ENCODE measurements at regions of chr10 and their contacts with region 1.

Region 1: DNA sequence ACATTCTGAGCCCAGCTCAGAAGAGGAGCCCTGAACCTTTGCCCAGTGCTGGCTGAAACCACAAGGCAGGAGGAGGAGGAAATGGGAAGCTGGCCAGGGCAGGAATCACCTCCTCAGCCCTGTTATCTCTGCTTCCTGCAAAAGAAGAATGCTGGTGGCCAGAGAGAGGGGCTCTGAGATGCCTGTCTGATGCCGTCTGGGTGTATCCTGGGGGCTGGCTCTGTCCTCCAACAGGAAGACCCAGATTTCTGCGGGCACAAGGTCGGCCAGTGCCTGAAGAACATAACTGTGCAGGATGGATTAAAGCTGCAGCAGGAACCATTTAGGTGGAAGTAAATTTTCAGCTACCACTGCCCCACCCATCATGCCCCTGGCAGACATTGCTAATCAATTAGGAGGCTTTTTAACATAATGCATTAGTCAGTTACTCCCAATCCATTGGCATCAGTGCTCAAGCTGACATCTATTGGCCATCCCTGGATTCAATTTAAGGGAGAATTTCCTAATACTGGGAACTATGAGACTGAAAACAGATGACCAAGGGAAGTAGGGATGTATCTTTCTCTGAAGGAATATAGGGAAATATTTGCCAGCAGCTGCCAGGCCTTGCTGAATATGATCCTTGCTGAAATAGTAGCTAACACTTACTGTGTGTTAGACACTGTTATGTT is 67.7 kb downstream of the COL13A1 start:
- DNase-seq: no peak
- ATAC-seq: no peak
- H3K4me3 Mint-ChIP-seq: no peak overlapping the region
- H3K27ac Mint-ChIP-seq: no peak overlapping the region
- H3K4me1 Mint-ChIP-seq: peaks cover 93% of the 10 kb centered on the region
- H3K27me3 Mint-ChIP-seq: peaks cover 18% of the 10 kb centered on the region
- CTCF ChIP-seq: no peak

Region 2: GRCh38 chr10:69749178-69750010 is 120.0 kb before region 1 on chr10:
- CTCF ChIA-PET with region 1: no interaction called
- POLR2A ChIA-PET with region 1: no interaction called
- DNase-seq: no peak
- ATAC-seq: no peak
- H3K4me3 Mint-ChIP-seq: no peak overlapping the region
- H3K27ac Mint-ChIP-seq: no peak overlapping the region
- H3K4me1 Mint-ChIP-seq: peaks cover 9% of the 10 kb centered on the region
- H3K27me3 Mint-ChIP-seq: peaks cover 22% of the 10 kb centered on the region
- CTCF ChIP-seq: no peak

Region 3: GRCh38 chr10:69800109-69800508 is 69.3 kb before region 1 on chr10:
- CTCF ChIA-PET with region 1: interaction called, 12 read pairs
- POLR2A ChIA-PET with region 1: no interaction called
- DNase-seq: peak; percentile 72
- ATAC-seq: peak; percentile 58
- H3K4me3 Mint-ChIP-seq: no peak overlapping the region; the same call in 1 of the 2 replicates
- H3K27ac Mint-ChIP-seq: no peak overlapping the region
- H3K4me1 Mint-ChIP-seq: peaks cover 37% of the 10 kb centered on the region
- H3K27me3 Mint-ChIP-seq: peaks cover 74% of the 10 kb centered on the region
- CTCF ChIP-seq: peak; percentile 48; the same call in 1 of the 2 replicates

Region 4: GRCh38 chr10:69826789-69827554 is 42.5 kb before region 1 on chr10:
- CTCF ChIA-PET with region 1: interaction called, 10 read pairs
- POLR2A ChIA-PET with region 1: no interaction called
- DNase-seq: peak; percentile 36
- ATAC-seq: peak; percentile 79
- H3K4me3 Mint-ChIP-seq: no peak overlapping the region
- H3K27ac Mint-ChIP-seq: no peak overlapping the region
- H3K4me1 Mint-ChIP-seq: peaks cover 24% of the 10 kb centered on the region
- H3K27me3 Mint-ChIP-seq: peaks cover 5% of the 10 kb centered on the region; the same call in 1 of the 2 replicates
- CTCF ChIP-seq: no peak

Region 5: DNA sequence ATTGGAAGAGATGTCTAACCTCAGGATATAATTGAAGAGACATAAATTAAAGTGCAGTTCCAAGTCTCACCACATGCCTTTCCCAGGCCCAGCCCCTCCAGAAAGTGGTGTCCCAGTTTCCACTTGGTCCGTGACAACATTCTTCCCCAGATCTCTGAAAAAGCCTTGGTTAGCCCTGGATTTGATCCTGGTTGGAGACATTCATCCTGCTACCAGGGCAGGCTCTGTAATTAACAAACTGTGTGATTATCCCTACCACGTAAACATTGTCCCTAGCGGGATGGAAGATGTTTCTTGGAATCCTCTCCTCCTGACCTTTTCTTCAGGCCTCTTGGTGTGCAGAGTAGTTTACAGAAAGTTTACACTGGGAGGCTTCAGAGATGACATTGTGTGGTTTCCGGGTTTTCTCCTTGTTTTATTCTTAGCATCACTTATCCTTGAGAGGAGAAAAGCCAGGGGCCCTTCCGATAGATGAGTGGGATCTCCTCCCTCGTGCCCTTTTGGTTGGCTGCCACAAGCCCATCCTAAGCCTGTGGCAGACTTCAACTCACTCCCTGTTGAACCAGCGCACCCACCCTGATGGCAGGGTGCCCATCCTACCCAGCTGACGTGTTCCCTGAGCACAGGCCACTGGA is 16.1 kb after region 1 on chr10:
- CTCF ChIA-PET with region 1: interaction called, 11 read pairs
- POLR2A ChIA-PET with region 1: no interaction called
- DNase-seq: no peak
- ATAC-seq: peak; percentile 48
- H3K4me3 Mint-ChIP-seq: no peak overlapping the region
- H3K27ac Mint-ChIP-seq: no peak overlapping the region
- H3K4me1 Mint-ChIP-seq: peaks cover 16% of the 10 kb centered on the region
- H3K27me3 Mint-ChIP-seq: no peaks in the 10 kb centered on the region; the same call in none of the 2 replicates
- CTCF ChIP-seq: peak; percentile 42; the same call in 1 of the 2 replicates

Region 6: GRCh38 chr10:69901628-69902505 is 32.4 kb after region 1 on chr10:
- CTCF ChIA-PET with region 1: interaction called, 13 read pairs
- POLR2A ChIA-PET with region 1: no interaction called
- DNase-seq: peak; percentile 77
- ATAC-seq: peak; percentile 86
- H3K4me3 Mint-ChIP-seq: no peak overlapping the region
- H3K27ac Mint-ChIP-seq: peak overlapping the region; percentile 86
- H3K4me1 Mint-ChIP-seq: peaks cover 35% of the 10 kb centered on the region
- H3K27me3 Mint-ChIP-seq: peaks cover 3% of the 10 kb centered on the region
- CTCF ChIP-seq: peak; percentile 61; the same call in 1 of the 2 replicates